IMR-90 (cell line): ENCODE measurements at regions of chr18 and their contacts with region 1.

Region 1: DNA sequence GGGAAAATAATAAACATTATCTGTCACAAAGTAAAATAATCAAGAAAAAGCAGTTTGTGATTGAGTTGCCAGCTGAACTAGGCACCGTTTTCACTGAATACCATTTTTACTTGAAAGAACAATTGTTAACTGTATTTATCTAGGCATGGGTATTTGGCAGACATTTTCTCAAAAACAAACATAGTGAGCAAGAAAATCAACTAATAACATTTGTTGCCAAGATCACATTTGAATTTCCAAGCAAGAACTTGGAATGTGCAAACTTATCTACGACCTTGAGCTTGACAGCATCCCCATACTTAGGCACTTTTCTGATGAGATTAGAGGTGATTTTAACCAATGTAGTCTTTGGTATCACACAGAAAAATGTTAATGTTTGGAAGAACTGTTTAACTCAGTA is 16.7 kb downstream of the SS18 start:
- DNase-seq: no peak
- ATAC-seq: peak; percentile 11; the same call in 1 of the 2 replicates
- H3K4me3 ChIP-seq: no peak overlapping the region
- H3K27ac ChIP-seq: no peak overlapping the region; the same call in 1 of the 2 replicates
- H3K4me1 ChIP-seq: peaks cover 2% of the 10 kb centered on the region; the same call in 1 of the 2 replicates
- H3K27me3 ChIP-seq: no peaks in the 10 kb centered on the region
- CTCF ChIP-seq: no peak
- POLR2A ChIP-seq: no peak
- RAD21 ChIP-seq: no peak

Region 2: DNA sequence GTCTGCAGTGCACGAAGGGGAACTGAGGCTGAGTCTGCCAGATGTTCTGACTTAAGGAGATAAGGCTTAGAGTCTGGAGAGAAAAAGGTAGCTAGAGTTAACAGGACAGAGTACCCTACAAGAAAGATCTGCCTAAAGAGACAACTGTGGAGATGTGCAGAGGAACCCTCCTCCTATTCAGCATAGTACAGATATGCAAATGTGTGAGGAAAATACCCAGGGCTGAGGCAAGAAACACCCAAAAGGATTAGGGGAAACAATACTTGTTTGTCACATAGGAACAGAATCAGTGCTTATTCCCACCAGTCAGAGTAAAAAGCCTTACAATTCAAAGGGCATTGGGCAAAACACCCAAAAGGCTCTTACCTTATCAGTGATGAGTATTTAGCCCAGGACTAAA is 51.2 kb before region 1 on chr18:
- CTCF ChIA-PET with region 1: no interaction called
- POLR2A ChIA-PET with region 1: no interaction called
- dilution Hi-C with region 1: no loop called
- in situ Hi-C with region 1: no loop called
- intact Hi-C with region 1: loop called (anchors 5 kb)
- DNase-seq: no peak
- ATAC-seq: no peak
- H3K4me3 ChIP-seq: no peak overlapping the region
- H3K27ac ChIP-seq: no peak overlapping the region
- H3K4me1 ChIP-seq: no peaks in the 10 kb centered on the region
- H3K27me3 ChIP-seq: no peaks in the 10 kb centered on the region
- CTCF ChIP-seq: no peak
- POLR2A ChIP-seq: no peak
- RAD21 ChIP-seq: no peak